ENCODE measurements at regions of chr3 and their contacts with region 1.

Region 1: GRCh38 chr3:19946832-19947548 is at the start of gene RAB5A:
- DNase-seq: peak; percentile 99
- H3K4me3 ChIP-seq: peak within 1 kb of the TSS; percentile 91 to 100 (median 98)
- H3K27ac ChIP-seq: peak within 1 kb of the TSS; percentile 97 to 100 (median 100)
- H3K4me1 ChIP-seq: peaks cover 10 to 30% (median 19%) of the 10 kb centered on the region in 4 donors
- H3K27me3 ChIP-seq: no peaks in the 10 kb centered on the region
- CTCF ChIP-seq: no peak
- EP300 ChIP-seq: peak; percentile 81
- POLR2A ChIP-seq: peak; percentile 95
- total RNA-seq, gene RAB5A: 80.6 to 105 (median 87.5) TPM

Region 2: GRCh38 chr3:19898721-19899120 is 48.3 kb before region 1 on chr3:
- in situ Hi-C with region 1: loop called in 1 of 4 experiments (anchors 10 kb)
- intact Hi-C with region 1: no loop called
- DNase-seq: no peak
- H3K4me3 ChIP-seq: no peak overlapping the region
- H3K27ac ChIP-seq: no peak overlapping the region
- H3K4me1 ChIP-seq: peaks cover 0 to 17% (median 8%) of the 10 kb centered on the region in 4 donors
- H3K27me3 ChIP-seq: no peaks in the 10 kb centered on the region
- CTCF ChIP-seq: no peak
- EP300 ChIP-seq: no peak
- POLR2A ChIP-seq: no peak

Region 3: GRCh38 chr3:19961960-19962359 is 15.0 kb after region 1 on chr3:
- in situ Hi-C with region 1: no loop called
- intact Hi-C with region 1: no loop called
- DNase-seq: no peak
- H3K4me3 ChIP-seq: no peak overlapping the region
- H3K27ac ChIP-seq: no peak overlapping the region
- H3K4me1 ChIP-seq: peaks cover 0 to 33% (median 0%) of the 10 kb centered on the region in 4 donors
- H3K27me3 ChIP-seq: no peaks in the 10 kb centered on the region
- CTCF ChIP-seq: no peak
- EP300 ChIP-seq: no peak
- POLR2A ChIP-seq: no peak

Region 4: GRCh38 chr3:20008646-20009045 is 61.7 kb after region 1 on chr3:
- in situ Hi-C with region 1: no loop called
- intact Hi-C with region 1: loop called (anchors 2 kb)
- DNase-seq: no peak
- H3K4me3 ChIP-seq: no peak overlapping the region
- H3K27ac ChIP-seq: no peak overlapping the region
- H3K4me1 ChIP-seq: no peaks in the 10 kb centered on the region
- H3K27me3 ChIP-seq: no peaks in the 10 kb centered on the region
- CTCF ChIP-seq: no peak
- EP300 ChIP-seq: no peak
- POLR2A ChIP-seq: no peak

Region 5: DNA sequence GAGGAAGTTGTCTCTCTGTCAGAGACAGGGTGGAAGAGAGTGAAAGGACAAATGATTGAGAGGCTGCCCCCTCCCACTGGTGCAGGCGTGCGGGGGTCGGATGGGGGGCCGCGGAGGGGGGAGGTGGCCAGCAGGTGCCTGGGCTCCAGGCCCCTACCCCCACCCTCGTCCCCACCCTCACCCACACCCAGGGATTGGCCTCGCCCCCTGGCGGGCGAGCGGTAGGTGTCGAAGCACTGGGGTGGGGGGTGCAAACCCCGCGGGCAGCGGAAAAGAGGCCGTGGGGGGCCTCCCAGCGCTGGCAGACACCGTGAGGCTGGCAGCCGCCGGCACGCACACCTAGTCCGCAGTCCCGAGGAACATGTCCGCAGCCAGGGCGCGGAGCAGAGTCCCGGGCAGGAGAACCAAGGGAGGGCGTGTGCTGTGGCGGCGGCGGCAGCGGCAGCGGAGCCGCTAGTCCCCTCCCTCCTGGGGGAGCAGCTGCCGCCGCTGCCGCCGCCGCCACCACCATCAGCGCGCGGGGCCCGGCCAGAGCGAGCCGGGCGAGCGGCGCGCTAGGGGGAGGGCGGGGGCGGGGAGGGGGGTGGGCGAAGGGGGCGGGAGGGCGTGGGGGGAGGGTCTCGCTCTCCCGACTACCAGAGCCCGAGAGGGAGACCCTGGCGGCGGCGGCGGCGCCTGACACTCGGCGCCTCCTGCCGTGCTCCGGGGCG is 92.9 kb after region 1 on chr3 and contains the start of gene KAT2B:
- in situ Hi-C with region 1: loop called in 2 of 4 experiments (anchors 5 to 10 kb)
- intact Hi-C with region 1: loop called (anchors 5 kb)
- DNase-seq: peak; percentile 85
- H3K4me3 ChIP-seq: peak within 1 kb of the TSS; percentile 73 to 95 (median 82)
- H3K27ac ChIP-seq: peak within 1 kb of the TSS; percentile 94 to 100 (median 99)
- H3K4me1 ChIP-seq: peaks cover 20 to 46% (median 38%) of the 10 kb centered on the region in 4 donors
- H3K27me3 ChIP-seq: no peaks in the 10 kb centered on the region
- CTCF ChIP-seq: peak; percentile 79 to 88 (median 81)
- EP300 ChIP-seq: no peak
- POLR2A ChIP-seq: peak; percentile 49
- total RNA-seq, gene KAT2B: 21.3 to 35.5 (median 30.2) TPM

Region 6: DNA sequence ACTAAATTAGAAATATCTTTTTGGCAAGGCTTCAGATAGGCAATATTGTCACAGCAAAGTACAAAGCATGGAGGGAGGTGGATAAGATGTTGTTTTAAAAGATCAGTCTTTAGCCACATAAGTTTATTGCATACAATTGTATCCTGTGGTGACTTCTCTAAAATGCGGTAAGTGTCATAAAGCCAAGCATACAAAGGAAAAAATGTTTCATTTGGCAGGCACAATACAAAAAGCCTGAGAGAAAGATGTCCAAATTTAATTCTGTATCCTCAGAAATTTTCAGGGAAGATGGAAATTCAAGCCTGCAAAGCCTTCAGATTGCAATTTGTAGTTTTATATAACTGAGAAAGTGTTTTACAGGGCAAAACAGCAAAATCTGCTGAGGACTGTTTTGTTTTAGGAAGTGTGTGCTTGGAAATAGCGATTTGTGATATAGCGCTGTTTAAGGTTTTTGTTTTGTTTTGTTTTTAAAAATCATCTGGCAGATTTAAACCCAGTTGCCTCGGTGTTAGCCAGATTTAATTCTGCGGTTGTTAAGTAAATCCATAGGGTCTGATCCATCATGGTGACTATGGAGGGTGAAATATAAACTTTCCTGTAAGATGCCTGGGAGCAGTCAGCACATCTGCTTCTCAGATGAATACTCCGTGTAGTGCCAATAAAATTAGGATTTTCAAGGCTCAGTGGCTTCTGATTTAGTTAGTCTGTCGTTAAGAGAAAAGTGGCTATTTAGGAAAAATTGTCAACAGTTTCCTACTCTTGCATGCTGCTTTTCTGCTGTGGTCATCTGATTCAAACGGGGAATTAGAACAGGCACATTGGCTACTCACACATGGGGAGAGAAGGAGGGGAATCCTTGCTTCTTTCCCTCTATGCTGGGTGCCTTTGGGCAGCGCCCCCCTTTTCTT is 101.2 kb after region 1 on chr3:
- in situ Hi-C with region 1: loop called in 1 of 4 experiments (anchors 10 kb)
- intact Hi-C with region 1: loop called (anchors 5 kb)
- DNase-seq: no peak
- H3K4me3 ChIP-seq: no peak overlapping the region
- H3K27ac ChIP-seq: peak overlapping the region; percentile 36 to 48 (median 42)
- H3K4me1 ChIP-seq: peaks cover 18 to 50% (median 29%) of the 10 kb centered on the region in 4 donors
- H3K27me3 ChIP-seq: no peaks in the 10 kb centered on the region
- CTCF ChIP-seq: no peak
- EP300 ChIP-seq: no peak
- POLR2A ChIP-seq: no peak

Region 7: DNA sequence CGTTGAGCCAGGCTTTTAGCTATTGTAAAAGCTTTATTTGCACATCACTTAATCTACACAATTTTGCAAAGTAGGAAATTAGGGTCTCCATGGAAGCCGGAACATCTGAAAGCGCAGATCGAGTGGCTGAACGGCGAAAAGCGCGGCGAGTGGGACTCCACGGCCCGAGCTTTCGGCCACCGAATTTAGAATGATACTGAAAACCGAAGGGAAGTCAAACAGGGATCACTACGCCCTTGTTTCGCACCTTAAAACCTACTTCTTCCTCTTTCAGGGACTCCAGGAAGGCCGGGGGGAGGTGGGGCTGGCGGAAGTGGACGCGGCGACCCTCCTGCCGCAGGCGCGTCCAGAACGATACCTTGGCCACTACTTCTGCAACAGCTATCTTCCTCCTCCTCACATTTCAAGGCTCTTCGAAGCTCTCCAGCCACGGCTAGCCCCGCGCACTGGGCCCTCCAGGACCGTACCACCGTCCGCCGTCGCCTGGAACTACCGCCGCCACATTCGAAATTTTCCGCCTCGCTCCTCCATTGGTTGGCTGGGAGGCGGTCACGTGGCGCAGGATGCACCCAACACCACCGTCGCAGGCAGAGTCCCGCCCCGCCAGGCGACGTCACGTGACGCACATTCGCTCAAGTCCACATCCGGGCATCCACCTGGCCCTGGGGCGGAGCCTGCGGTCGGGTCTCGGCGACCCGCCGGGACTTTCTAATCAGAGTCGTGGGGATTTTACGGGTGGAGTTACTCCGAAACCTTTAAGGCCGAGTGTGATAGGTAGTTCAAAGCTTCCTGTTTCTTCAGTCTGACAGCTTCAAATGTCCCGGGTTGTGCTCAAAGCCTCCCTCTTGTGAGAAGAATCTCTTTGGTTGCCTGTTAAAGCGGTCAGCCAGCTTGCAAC is 239.0 kb after region 1 on chr3 and contains the start of gene SGO1:
- in situ Hi-C with region 1: loop called in 1 of 4 experiments (anchors 25 kb)
- intact Hi-C with region 1: no loop called
- DNase-seq: peak; percentile 100
- H3K4me3 ChIP-seq: peak within 1 kb of the TSS; percentile 57 to 74 (median 66)
- H3K27ac ChIP-seq: peak within 1 kb of the TSS; percentile 88 to 97 (median 90)
- H3K4me1 ChIP-seq: peaks cover 0 to 21% (median 11%) of the 10 kb centered on the region in 4 donors
- H3K27me3 ChIP-seq: no peaks in the 10 kb centered on the region
- CTCF ChIP-seq: no peak
- EP300 ChIP-seq: no peak
- POLR2A ChIP-seq: peak; percentile 88
- total RNA-seq, gene SGO1: 0.79 to 26.5 (median 0.96) TPM in 3 of 4 donors, not detected in the other